CD8-positive, alpha-beta memory T cell (primary cell): ENCODE measurements at regions of chr2 and their contacts with region 1.

Region 1: DNA sequence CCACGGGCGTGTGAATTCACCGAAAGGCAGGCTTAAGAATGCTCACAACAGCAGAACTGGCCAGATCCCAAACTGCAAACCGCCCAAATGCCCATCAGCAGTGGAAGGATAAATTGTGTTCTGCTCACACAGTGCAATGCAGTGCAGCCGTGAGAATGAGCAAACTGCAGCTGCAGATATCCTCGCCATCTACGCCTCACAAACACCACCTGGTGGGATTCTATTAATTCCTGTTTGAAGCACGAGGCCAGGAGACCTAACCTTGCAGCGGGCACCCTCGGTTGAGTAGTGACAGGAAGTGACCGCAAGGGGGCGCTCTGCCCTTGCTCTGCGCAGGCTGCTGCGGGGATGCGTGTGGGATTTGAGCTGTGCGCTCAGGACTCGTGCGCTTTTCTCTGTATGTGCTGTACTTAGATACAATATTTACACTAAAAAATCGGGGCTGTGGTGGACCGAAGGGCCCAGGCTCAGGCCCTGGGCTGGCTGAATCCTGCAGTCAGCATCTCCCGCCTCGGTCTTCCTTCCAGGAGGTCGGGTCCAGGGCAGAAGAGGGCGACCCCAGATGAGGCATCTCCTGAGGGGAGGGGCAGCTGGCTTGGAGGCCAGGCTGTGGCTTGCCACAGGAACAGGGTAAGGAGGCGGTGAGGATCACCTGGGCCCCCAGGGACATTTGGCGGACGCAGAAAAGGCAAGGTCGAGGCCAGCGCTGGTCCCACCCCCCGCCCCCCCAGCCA is 19.8 kb upstream of the PDIA6 start:
- DNase-seq: peak; percentile 67 to 83 (median 72)
- H3K4me3 ChIP-seq: no peak overlapping the region
- H3K4me3 Mint-ChIP-seq: peak overlapping the region in 3 of 7 donors; percentile 13 to 51 (median 23)
- H3K27ac ChIP-seq: no peak overlapping the region
- H3K27ac Mint-ChIP-seq: peak overlapping the region in 1 of 8 donors; percentile 50
- H3K4me1 ChIP-seq: peaks cover 9% of the 10 kb centered on the region
- H3K4me1 Mint-ChIP-seq: peaks cover 5 to 8% (median 5%) of the 10 kb centered on the region in 3 donors
- H3K27me3 ChIP-seq: no peaks in the 10 kb centered on the region
- H3K27me3 Mint-ChIP-seq: peaks cover 15 to 41% of the 10 kb centered on the region in 2 donors

Region 2: DNA sequence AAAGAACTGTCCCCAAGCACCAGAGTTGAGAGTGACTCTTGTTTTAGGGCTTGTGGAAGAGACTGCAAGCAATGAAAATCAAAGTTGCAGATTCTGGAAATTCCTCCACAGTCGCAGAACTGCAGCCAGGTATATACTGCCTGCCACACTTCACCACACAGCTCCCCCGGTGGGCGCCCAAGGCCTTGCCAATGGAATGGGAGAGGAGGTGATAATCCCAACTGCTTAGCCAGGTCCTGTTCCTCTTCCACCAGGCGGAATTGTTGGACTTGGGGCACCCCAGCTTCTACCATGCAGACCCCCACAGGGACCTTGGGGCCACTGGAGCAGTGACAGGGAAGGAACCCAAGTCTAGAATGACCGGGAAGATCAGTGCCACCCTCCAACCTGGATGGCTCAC is 15.0 kb before region 1 on chr2:
- CTCF ChIA-PET with region 1: interaction called, 15 read pairs
- POLR2A ChIA-PET with region 1: interaction called, 3 read pairs
- DNase-seq: no peak
- H3K4me3 ChIP-seq: no peak overlapping the region
- H3K4me3 Mint-ChIP-seq: peak overlapping the region in 1 of 7 donors; percentile 7
- H3K27ac ChIP-seq: no peak overlapping the region
- H3K27ac Mint-ChIP-seq: no peak overlapping the region
- H3K4me1 ChIP-seq: no peaks in the 10 kb centered on the region
- H3K4me1 Mint-ChIP-seq: peaks cover 0 to 3% (median 2%) of the 10 kb centered on the region in 3 donors
- H3K27me3 ChIP-seq: peaks cover 6% of the 10 kb centered on the region
- H3K27me3 Mint-ChIP-seq: peaks cover 3 to 7% of the 10 kb centered on the region in 2 donors

Region 3: DNA sequence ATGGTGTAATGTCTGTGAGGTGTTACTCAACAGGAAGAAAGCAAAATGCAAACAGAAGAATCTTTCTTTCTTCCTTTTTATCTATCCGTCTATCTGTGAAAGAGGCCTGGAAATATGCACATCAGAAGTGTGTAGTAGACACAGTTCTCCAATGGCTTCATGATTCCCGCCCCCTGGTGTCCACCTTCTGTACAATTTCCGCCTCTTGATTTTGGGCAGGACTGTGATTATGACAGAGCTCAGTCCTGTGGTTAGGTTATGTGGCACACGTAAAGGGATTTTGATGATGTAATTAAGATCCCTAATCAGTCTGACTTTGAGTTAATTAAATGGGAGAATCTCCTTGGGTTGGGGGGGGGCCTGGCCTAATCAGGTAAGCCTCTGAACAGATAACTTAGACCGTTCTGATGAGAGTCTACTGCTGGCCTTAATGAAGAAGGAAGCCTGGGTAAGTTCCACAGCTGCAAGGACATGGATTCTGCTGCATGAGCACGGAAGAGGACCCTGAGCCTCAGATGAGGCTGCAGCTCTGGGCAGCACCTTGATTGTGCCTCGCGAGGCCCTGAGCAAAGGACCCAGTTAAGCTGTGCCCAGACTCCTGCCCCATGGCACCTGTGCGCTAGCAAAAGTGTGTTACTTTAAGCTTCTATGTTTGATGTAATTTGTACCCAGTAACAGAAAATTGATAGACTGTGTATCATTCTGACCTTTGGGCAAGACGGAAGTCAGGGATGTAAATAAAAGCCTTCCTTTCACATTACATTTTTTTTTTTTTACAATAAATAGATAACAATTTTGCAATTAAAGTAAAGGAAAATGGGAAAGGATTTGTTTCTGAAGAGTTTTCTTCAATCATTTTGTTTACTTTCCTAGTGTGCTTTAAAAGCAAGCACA is 68.1 kb after region 1 on chr2:
- CTCF ChIA-PET with region 1: interaction called, 16 read pairs
- POLR2A ChIA-PET with region 1: no interaction called
- DNase-seq: peak in 1 of 5 donors; percentile 40
- H3K4me3 ChIP-seq: no peak overlapping the region
- H3K4me3 Mint-ChIP-seq: no peak overlapping the region
- H3K27ac ChIP-seq: no peak overlapping the region
- H3K27ac Mint-ChIP-seq: no peak overlapping the region
- H3K4me1 ChIP-seq: no peaks in the 10 kb centered on the region
- H3K4me1 Mint-ChIP-seq: no peaks in the 10 kb centered on the region
- H3K27me3 ChIP-seq: no peaks in the 10 kb centered on the region
- H3K27me3 Mint-ChIP-seq: peaks cover 4 to 18% of the 10 kb centered on the region in 2 donors

Region 4: DNA sequence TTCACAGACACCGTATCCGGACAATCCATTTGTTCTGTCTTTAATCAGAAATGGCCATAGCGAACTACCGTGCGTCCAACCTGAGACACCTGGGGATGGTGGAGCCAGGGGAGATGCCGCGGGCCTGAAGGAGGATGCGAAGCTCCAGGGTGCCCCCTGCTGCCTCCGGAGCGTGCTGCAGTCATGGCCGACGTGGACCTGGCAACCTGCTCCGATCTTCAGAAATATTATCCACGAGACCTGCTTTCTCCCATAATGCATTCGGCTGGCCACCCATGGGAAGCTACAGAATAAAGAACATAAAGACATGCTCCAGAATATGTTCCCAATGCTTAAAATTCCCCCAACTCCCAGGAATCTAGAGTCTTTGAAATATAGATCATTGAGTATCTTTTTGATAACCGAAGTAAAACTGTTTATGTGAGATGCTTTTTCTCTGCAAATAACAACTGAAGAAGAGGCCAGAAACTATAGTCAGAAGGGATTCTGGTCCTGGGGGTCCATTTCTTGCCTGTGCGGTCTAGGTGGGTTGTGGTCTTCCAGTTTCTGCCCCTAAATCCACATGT is 292.2 kb after region 1 on chr2:
- CTCF ChIA-PET with region 1: interaction called, 231 read pairs
- POLR2A ChIA-PET with region 1: no interaction called
- DNase-seq: peak; percentile 32 to 63 (median 50)
- H3K4me3 ChIP-seq: no peak overlapping the region
- H3K4me3 Mint-ChIP-seq: no peak overlapping the region
- H3K27ac ChIP-seq: no peak overlapping the region
- H3K27ac Mint-ChIP-seq: no peak overlapping the region
- H3K4me1 ChIP-seq: peaks cover 2% of the 10 kb centered on the region
- H3K4me1 Mint-ChIP-seq: peaks cover 12 to 27% (median 20%) of the 10 kb centered on the region in 3 donors
- H3K27me3 ChIP-seq: no peaks in the 10 kb centered on the region
- H3K27me3 Mint-ChIP-seq: peaks cover 0 to 3% of the 10 kb centered on the region in 2 donors